Activated naive CD8-positive, alpha-beta T cell treated with anti-CD3 and anti-CD28 coated beads, Interleukin-2, amount 10 ng/mL, durations not matched to agents 7 days and 5 days (primary cell): ENCODE measurements at regions of chr2 and their contacts with region 1.

Region 1: DNA sequence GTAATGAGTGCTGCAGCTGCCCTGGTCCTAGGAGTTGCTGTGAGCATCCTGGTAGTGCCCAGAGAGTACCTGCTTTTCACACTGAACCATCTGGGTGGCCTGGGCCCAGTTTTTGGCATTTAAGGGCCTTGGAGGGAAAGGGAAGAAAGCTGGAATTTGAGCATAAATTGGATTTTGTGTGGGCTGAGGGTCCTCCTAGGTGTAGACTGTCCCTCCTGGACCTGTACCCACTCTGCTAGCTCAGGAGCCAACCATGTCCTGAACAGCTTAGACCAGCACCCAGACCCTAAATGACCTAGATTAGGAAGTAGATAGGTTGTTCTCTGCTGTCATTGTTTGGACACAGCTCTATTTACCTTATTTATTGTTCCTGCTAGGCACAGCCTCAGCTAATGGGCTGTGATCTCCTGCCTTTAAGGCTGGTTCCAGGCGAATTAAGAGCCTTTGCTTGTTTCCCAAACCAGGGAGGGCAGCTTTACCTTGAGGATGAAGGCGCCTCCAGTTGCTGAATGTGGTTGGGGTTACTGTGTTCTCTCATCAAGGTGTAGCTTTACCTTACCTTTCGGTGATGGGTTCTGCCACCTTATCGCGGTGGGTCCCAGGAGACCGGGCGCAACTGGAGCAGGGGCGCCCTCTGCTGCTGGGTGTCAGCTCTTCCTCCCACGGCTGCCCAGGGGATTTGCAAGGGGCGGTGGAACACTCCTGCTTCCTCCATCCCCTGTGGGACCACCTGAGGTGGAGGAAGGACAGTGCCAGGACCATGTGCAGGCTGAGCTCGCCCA is 34.4 kb downstream of the ITGA6 start:
- DNase-seq: peak; percentile 85
- ATAC-seq: peak; percentile 58
- H3K4me3 Mint-ChIP-seq: peak overlapping the region; percentile 81
- H3K27ac Mint-ChIP-seq: peak overlapping the region; percentile 87
- H3K4me1 Mint-ChIP-seq: peaks cover 76% of the 10 kb centered on the region
- H3K27me3 Mint-ChIP-seq: no peaks in the 10 kb centered on the region

Region 2: DNA sequence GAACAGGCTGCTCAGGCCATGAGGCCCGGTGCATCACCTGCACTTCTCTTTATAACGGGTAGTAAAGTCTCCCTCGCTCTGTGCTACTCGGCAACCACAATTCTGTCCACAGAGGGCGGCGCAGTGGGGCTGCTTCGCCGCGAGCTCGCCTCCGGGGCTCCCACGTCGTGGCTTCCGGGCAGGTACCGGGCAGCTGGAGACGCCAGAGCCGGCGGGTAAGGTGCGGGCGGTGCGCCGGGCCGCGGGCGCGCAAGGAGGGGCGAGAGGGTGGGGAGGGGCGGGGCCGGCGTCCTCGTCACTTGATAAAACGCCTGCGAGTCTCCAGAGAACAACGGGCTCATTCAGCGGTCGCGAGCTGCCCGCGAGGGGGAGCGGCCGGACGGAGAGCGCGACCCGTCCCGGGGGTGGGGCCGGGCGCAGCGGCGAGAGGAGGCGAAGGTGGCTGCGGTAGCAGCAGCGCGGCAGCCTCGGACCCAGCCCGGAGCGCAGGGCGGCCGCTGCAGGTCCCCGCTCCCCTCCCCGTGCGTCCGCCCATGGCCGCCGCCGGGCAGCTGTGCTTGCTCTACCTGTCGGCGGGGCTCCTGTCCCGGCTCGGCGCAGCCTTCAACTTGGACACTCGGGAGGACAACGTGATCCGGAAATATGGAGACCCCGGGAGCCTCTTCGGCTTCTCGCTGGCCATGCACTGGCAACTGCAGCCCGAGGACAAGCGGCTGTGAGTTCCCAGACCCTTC is 34.4 kb before region 1 on chr2 and contains the start of gene ITGA6:
- POLR2A ChIA-PET with region 1: interaction called, 36 read pairs
- DNase-seq: peak; percentile 80
- ATAC-seq: peak; percentile 68
- H3K4me3 Mint-ChIP-seq: peak within 1 kb of the TSS; percentile 85
- H3K27ac Mint-ChIP-seq: peak within 1 kb of the TSS; percentile 53
- H3K4me1 Mint-ChIP-seq: peaks cover 29% of the 10 kb centered on the region
- H3K27me3 Mint-ChIP-seq: peaks cover 24% of the 10 kb centered on the region
- total RNA-seq, gene ITGA6: 22.8 to 26.8 TPM

Region 3: GRCh38 chr2:172442072-172442895 is 19.5 kb before region 1 on chr2:
- POLR2A ChIA-PET with region 1: interaction called, 17 read pairs
- DNase-seq: no peak
- ATAC-seq: peak; percentile 34
- H3K4me3 Mint-ChIP-seq: peak overlapping the region; percentile 57
- H3K27ac Mint-ChIP-seq: peak overlapping the region; percentile 68
- H3K4me1 Mint-ChIP-seq: peaks cover 44% of the 10 kb centered on the region
- H3K27me3 Mint-ChIP-seq: no peaks in the 10 kb centered on the region